ENCODE measurements at regions of chr12 and their contacts with region 1.

Region 1: GRCh38 chr12:50786498-50787231 is 22.8 kb downstream of the ATF1 start:
- DNase-seq: peak; percentile 98
- H3K4me3 Mint-ChIP-seq: peak overlapping the region; percentile 9
- H3K27ac Mint-ChIP-seq: peak overlapping the region; percentile 96
- H3K4me1 Mint-ChIP-seq: peaks cover 63% of the 10 kb centered on the region
- H3K27me3 Mint-ChIP-seq: no peaks in the 10 kb centered on the region
- CTCF ChIP-seq: no peak

Region 2: DNA sequence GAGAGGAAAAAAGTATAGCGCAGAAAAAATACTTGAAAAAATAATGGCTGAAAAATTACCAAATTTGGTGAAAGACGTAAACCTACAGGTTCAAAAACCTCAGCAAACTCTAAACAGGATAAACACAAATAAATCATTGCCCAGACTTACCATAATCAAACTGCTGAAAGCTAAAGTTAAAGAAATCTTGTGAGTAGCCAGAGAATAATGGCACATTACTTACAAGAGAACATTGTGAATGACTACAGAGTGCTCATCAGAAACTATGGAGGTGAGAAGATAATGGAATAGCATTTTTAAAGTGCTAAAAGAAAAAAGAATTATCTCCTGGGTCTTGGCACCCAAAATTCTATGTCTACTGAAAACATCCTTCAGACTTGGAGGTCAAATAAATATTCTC is 13.2 kb after region 1 on chr12:
- CTCF ChIA-PET with region 1: interaction called, 3 read pairs
- POLR2A ChIA-PET with region 1: interaction called, 10 read pairs
- intact Hi-C with region 1: no loop called
- DNase-seq: no peak
- H3K4me3 Mint-ChIP-seq: no peak overlapping the region
- H3K27ac Mint-ChIP-seq: no peak overlapping the region
- H3K4me1 Mint-ChIP-seq: peaks cover 6% of the 10 kb centered on the region
- H3K27me3 Mint-ChIP-seq: no peaks in the 10 kb centered on the region
- CTCF ChIP-seq: no peak

Measured in MCF 10A (cell line).